AG04450 (cell line): ENCODE measurements at regions of chr5 and their contacts with region 1.

Region 1: GRCh38 chr5:14190194-14191164 is 47.3 kb downstream of the TRIO start:
- DNase-seq: peak; percentile 95
- H3K4me3 ChIP-seq: peak overlapping the region; percentile 34
- H3K27ac ChIP-seq: peak overlapping the region; percentile 97
- H3K27me3 ChIP-seq: no peaks in the 10 kb centered on the region
- CTCF ChIP-seq: no peak

Region 2: DNA sequence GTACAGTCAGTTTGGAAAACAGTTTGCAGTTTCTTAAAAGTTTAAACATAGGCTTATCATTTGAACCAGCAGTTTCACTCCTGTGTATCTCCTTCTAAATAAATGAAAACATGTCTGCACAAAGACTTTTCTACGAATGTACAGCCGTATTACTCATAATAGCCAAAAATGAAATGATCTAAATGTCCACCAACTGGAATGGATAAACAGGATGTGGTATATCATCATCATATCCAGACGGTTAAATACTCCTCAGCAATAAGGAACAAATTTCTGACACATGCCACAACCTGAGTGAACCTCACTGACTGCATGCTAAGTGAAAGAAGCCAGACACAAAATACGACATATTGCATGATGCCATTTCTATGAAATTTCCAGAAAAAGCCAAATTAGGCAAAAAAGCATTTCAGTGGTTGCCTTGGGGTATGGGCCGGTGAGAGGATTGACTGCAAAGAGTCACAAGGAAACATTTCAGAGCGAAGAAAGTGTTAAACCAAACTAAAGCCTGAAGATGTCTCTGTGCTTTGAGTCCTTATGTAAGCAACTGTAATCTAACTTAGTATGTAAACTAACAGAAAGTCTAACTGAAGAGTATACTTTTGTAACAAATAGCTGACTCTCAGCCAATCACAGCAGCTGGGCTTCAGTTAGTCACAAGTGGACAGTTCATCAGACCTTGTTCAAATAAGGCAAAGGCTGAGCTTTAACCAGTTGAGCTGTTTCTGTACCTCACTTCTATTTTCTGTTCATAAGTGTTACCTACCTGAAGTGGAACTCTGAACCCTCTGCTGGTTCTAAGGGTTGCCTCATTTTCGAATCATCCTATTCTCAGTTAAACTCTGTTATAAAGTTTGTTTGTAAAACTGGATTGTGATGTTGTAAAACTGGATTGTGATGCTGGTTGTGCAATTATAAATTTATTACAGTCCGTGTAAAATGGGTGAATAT is 17.9 kb after region 1 on chr5:
- CTCF ChIA-PET with region 1: no interaction called
- POLR2A ChIA-PET with region 1: interaction called, 15 read pairs
- DNase-seq: peak; percentile 80
- H3K4me3 ChIP-seq: peak overlapping the region; percentile 8
- H3K27ac ChIP-seq: peak overlapping the region; percentile 93
- H3K27me3 ChIP-seq: no peaks in the 10 kb centered on the region
- CTCF ChIP-seq: no peak